ENCODE measurements at regions of chr1 and their contacts with region 1.

Region 1: DNA sequence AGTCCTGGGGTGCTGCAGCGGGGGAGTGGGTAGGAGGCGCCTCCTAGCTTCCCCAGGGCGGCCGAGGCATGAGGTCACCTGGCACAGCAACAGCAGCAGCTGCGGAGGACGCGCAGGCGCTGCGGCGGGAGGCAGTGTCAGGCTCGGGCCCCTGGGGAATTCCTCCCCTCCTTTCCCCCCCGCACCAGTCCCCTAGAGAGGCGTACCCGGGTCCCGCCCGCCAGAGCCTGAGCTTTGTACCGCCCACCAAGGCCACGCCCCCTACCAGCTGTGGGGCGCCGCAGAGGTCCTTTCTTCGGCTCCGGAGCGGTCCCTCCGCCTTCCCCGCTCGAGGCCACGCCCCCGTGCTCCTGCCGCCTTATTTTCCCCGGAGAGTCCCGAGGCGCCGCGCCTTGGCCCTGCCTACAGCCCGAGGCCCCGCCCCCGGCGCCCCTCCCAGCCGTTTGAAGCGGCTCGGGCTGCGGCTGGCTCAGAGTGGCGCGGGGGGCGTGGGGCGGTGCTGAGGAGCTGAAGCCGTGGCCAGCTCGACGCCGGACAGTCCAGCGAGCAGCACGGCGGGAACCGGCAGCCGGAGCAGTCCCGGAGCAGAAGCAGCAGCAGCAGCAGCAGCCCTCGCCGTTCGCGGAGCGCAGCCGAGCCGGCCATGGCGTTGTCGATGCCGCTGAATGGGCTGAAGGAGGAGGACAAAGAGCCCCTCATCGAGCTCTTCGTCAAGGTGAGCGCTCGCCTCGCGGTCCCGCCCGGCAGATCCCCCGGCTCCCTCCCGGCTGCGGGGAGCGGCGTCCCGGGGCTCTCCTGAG is at the start of gene CLIC4:
- DNase-seq: peak; percentile 99
- ATAC-seq: peak; percentile 78
- H3K4me3 Mint-ChIP-seq: peak within 1 kb of the TSS; percentile 95
- H3K27ac Mint-ChIP-seq: peak within 1 kb of the TSS; percentile 99
- H3K4me1 Mint-ChIP-seq: peaks cover 73% of the 10 kb centered on the region
- H3K27me3 Mint-ChIP-seq: no peaks in the 10 kb centered on the region
- CTCF ChIP-seq: no peak
- total RNA-seq, gene CLIC4: 98.2 and 99.8 TPM in 2 replicates

Region 2: DNA sequence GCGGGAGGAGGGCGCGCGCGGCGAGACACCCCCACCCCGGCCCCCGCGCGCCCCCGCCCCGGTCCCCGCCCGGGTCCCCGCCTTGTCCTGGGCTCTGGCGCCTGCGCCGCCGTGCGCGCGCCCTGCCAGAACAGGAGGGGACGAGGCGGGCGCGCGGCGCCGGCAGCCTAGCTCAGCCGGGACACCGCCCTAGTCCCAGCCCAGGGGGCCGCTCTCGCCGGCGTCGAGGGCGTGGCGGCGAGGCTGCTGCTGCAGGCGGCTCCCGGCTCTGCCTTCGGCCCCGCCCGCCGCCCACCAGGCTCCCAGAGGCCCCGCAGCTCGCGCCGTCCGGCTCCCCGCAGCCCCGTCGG is 242.4 kb before region 1 on chr1 and contains the start of gene RCAN3:
- CTCF ChIA-PET with region 1: no interaction called
- POLR2A ChIA-PET with region 1: interaction called, 7 read pairs
- intact Hi-C with region 1: loop called (anchors 10 kb)
- DNase-seq: peak; percentile 89
- ATAC-seq: peak; percentile 86
- H3K4me3 Mint-ChIP-seq: peak within 1 kb of the TSS; percentile 91
- H3K27ac Mint-ChIP-seq: peak within 1 kb of the TSS; percentile 97
- H3K4me1 Mint-ChIP-seq: peaks cover 52% of the 10 kb centered on the region
- H3K27me3 Mint-ChIP-seq: no peaks in the 10 kb centered on the region
- CTCF ChIP-seq: no peak
- total RNA-seq, gene RCAN3: 22.8 and 23.6 TPM in 2 replicates

Region 3: GRCh38 chr1:24642481-24643361 is 102.4 kb before region 1 on chr1 and contains the start of gene SRRM1:
- CTCF ChIA-PET with region 1: no interaction called
- POLR2A ChIA-PET with region 1: interaction called, 7 read pairs
- intact Hi-C with region 1: loop called (anchors 2 kb)
- DNase-seq: peak; percentile 96
- ATAC-seq: peak; percentile 90
- H3K4me3 Mint-ChIP-seq: peak within 1 kb of the TSS; percentile 96
- H3K27ac Mint-ChIP-seq: peak within 1 kb of the TSS; percentile 99
- H3K4me1 Mint-ChIP-seq: peaks cover 38% of the 10 kb centered on the region
- H3K27me3 Mint-ChIP-seq: no peaks in the 10 kb centered on the region
- CTCF ChIP-seq: no peak
- total RNA-seq, gene SRRM1: 214 and 220 TPM in 2 replicates

Region 4: GRCh38 chr1:24830680-24831272 is 85.7 kb after region 1 on chr1:
- CTCF ChIA-PET with region 1: interaction called, 21 read pairs
- POLR2A ChIA-PET with region 1: interaction called, 6 read pairs
- intact Hi-C with region 1: loop called (anchors 2 kb)
- DNase-seq: no peak
- ATAC-seq: peak; percentile 74
- H3K4me3 Mint-ChIP-seq: no peak overlapping the region
- H3K27ac Mint-ChIP-seq: no peak overlapping the region
- H3K4me1 Mint-ChIP-seq: peaks cover 46% of the 10 kb centered on the region
- H3K27me3 Mint-ChIP-seq: no peaks in the 10 kb centered on the region
- CTCF ChIP-seq: peak; percentile 51

Region 5: DNA sequence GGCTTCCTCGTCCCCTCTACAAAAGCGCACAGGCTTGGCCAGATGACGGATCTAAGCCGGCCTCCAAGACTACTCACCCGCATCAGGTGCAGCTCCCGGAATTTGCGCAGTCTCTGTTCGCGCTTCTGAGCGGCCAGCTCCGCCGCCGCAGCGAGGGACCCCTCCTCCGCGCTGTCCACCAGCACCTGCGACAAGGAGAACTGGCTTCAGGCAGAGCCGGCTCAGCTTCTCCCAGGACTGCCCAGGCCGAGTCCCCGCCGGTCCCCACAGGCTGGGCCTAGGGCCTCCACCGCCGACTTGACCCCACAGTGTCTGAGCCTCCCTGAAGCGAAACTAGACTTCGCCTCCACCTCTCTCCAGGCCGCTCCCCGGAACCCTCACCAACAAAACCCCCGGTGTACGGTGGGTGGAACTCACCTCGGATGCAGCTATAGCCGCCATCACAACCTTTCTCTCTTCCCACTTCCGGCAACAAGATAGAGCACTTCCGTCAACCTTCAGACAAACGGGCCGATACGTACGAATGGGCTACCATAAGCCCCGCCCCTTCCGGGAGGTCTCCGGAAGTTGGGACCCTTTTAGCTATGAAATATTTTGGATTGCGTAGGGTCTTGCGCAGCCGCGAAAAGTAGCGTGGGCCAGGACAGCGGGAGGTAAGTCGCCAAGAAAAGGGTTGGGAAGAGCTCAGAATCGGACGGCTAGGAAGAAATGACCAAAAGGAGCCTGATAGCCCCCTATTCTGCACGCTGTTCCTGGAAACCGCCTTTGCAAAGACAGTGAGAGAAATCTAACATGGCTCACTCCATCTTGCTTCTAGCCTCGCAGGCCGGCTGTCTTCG is 487.1 kb after region 1 on chr1 and contains the start of gene SYF2:
- CTCF ChIA-PET with region 1: no interaction called
- POLR2A ChIA-PET with region 1: interaction called, 3 read pairs
- intact Hi-C with region 1: loop called (anchors 1 kb)
- DNase-seq: peak; percentile 81
- ATAC-seq: peak; percentile 87
- H3K4me3 Mint-ChIP-seq: no peak within 1 kb of the TSS
- H3K27ac Mint-ChIP-seq: no peak within 1 kb of the TSS
- H3K4me1 Mint-ChIP-seq: peaks cover 36% of the 10 kb centered on the region
- H3K27me3 Mint-ChIP-seq: no peaks in the 10 kb centered on the region
- CTCF ChIP-seq: no peak
- total RNA-seq, gene SYF2: 51.1 and 53.9 TPM in 2 replicates